ENCODE measurements at regions of chr16 and their contacts with region 1.

Region 1: DNA sequence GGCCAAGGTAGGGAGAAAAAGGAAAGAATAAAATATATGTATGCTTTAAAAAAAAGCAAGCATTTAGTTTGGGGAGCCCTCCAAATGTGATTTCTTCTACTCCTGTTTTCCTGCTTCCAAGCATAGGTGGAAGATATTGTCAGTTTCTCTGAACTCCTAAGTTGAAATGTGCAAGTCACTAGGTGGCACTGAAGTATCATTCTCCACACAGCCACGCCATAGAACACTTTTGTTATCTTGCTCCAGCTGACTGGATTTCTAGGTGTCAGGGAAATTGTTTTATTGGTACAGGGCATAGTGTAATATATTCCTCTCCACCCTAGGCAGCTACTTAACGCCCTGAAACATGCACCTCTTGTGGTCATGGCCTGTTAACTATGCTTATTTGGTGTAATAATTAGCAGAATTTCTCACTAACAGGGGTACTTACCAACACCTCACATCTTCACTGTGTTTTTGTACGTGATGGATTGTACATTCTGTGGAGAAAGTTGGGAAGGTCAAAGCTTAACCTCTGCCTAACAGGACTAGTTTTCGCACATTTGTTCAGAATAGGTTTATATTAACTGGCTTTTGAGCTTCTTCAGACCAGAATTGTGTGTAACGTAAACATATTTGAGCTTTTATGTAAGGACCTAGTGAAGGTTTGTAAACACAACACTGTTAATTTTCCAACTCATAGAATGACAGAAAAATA is 69.3 kb downstream of the FTO start:
- DNase-seq: no peak
- H3K4me3 ChIP-seq: no peak overlapping the region
- H3K27ac ChIP-seq: no peak overlapping the region
- H3K4me1 ChIP-seq: peaks cover 5 to 53% of the 10 kb centered on the region in 2 donors
- H3K27me3 ChIP-seq: no peaks in the 10 kb centered on the region
- CTCF ChIP-seq: peak; percentile 9 to 64 (median 46)

Region 2: DNA sequence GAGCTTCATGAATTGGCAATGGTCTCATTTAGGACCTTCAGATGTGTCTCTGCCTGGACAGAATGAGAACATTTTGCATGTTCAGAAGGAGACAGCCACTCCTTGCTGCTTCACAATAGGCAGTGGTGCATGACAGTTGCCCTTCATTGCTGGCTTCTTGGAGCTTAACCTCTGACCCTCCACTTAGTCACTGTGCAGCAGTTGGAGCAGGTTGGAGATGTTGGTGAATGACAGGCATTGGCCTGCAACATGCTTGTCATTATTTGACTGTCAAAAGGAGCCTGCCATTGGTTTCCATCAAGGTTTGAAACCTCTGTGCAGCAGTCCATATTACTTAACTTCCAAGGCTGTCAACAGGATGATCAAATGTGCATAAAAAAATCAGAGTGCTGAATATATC is 46.7 kb before region 1 on chr16:
- intact Hi-C with region 1: no loop called
- DNase-seq: no peak
- H3K4me3 ChIP-seq: no peak overlapping the region
- H3K27ac ChIP-seq: no peak overlapping the region
- H3K4me1 ChIP-seq: no peaks in the 10 kb centered on the region
- H3K27me3 ChIP-seq: no peaks in the 10 kb centered on the region
- CTCF ChIP-seq: no peak

Region 3: GRCh38 chr16:53817117-53817755 is 43.9 kb after region 1 on chr16:
- intact Hi-C with region 1: loop called (anchors 5 kb)
- DNase-seq: no peak
- H3K4me3 ChIP-seq: no peak overlapping the region
- H3K27ac ChIP-seq: peak overlapping the region in 1 of 2 donors; percentile 45
- H3K4me1 ChIP-seq: peaks cover 3 to 4% of the 10 kb centered on the region in 2 donors
- H3K27me3 ChIP-seq: no peaks in the 10 kb centered on the region
- CTCF ChIP-seq: no peak

Region 4: DNA sequence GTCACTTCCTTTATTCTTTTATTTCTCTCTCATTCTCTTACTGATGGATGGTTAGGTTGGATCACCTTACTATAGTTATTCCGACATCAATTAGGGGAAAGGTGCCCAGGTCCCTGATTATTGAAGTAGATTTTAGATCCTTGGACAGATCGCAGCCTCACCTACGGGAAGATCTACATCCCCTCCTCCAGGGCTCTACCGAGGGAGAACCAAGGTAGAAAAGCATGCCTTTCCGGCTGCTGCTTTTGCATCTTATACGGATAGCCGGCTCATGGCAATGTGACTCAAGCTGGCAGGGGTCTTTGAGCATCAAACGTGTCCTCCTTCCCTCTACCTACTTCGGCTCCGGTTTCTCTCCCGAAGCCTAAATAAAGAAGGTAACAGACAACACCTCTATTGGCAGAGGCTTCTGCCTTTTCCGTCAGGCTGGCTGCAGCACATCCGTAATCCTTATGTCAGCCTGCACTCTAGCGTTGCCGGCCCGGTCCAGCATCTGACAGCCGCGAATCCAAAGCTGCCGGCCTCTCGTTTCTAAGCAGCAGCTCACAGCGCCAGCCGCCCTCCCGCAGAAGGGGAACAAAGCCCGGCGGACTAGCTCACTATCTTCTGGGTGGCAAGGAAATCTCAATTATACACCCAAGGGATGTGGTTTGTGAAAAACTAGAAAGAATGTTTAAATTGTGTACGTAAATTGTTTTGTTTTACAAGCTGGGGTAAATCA is 1597.6 kb after region 1 on chr16:
- intact Hi-C with region 1: loop called (anchors 5 kb)
- DNase-seq: peak in 1 of 2 donors; percentile 79
- H3K4me3 ChIP-seq: peak overlapping the region in 1 of 2 donors; percentile 30
- H3K27ac ChIP-seq: no peak overlapping the region
- H3K4me1 ChIP-seq: peaks cover 0 to 19% of the 10 kb centered on the region in 2 donors
- H3K27me3 ChIP-seq: no peaks in the 10 kb centered on the region
- CTCF ChIP-seq: peak in 2 of 3 experiments; percentile 45 to 60